CD8-positive, alpha-beta memory T cell (primary cell): ENCODE measurements at regions of chr1 and their contacts with region 1.

Region 1: GRCh38 chr1:55140546-55140983 is 74.6 kb downstream of the USP24 start:
- DNase-seq: peak; percentile 44 to 76 (median 57)
- H3K4me3 ChIP-seq: no peak overlapping the region
- H3K4me3 Mint-ChIP-seq: no peak overlapping the region
- H3K27ac ChIP-seq: no peak overlapping the region
- H3K27ac Mint-ChIP-seq: peak overlapping the region in 7 of 8 donors; percentile 12 to 93 (median 75)
- H3K4me1 ChIP-seq: no peaks in the 10 kb centered on the region
- H3K4me1 Mint-ChIP-seq: peaks cover 15 to 26% (median 19%) of the 10 kb centered on the region in 3 donors
- H3K27me3 ChIP-seq: no peaks in the 10 kb centered on the region
- H3K27me3 Mint-ChIP-seq: no peaks in the 10 kb centered on the region

Region 2: GRCh38 chr1:55277377-55278130 is 137.0 kb after region 1 on chr1:
- CTCF ChIA-PET with region 1: interaction called, 34 read pairs
- POLR2A ChIA-PET with region 1: interaction called, 3 read pairs
- DNase-seq: peak; percentile 56 to 83 (median 62)
- H3K4me3 ChIP-seq: no peak overlapping the region
- H3K4me3 Mint-ChIP-seq: no peak overlapping the region
- H3K27ac ChIP-seq: no peak overlapping the region
- H3K27ac Mint-ChIP-seq: peak overlapping the region in 2 of 8 donors; percentile 3 to 27
- H3K4me1 ChIP-seq: peaks cover 6% of the 10 kb centered on the region
- H3K4me1 Mint-ChIP-seq: peaks cover 3 to 5% (median 4%) of the 10 kb centered on the region in 3 donors
- H3K27me3 ChIP-seq: no peaks in the 10 kb centered on the region
- H3K27me3 Mint-ChIP-seq: peaks cover 1 to 4% of the 10 kb centered on the region in 2 donors